Mammary epithelial cell (primary cell): ENCODE measurements at regions of chr17 and their contacts with region 1.

Region 1: GRCh38 chr17:59440784-59441441 is 109.5 kb downstream of the YPEL2 start:
- DNase-seq: peak; percentile 72
- H3K4me3 ChIP-seq: no peak overlapping the region
- H3K27ac ChIP-seq: no peak overlapping the region
- H3K4me1 ChIP-seq: no peaks in the 10 kb centered on the region
- H3K27me3 ChIP-seq: no peaks in the 10 kb centered on the region
- CTCF ChIP-seq: peak; percentile 78 to 82

Region 2: GRCh38 chr17:59220376-59221158 is 220.3 kb before region 1 on chr17 and contains the start of gene GDPD1:
- CTCF ChIA-PET with region 1: no interaction called
- dilution Hi-C with region 1: no loop called
- in situ Hi-C with region 1: no loop called
- intact Hi-C with region 1: loop called (anchors 1 kb)
- DNase-seq: peak; percentile 86
- H3K4me3 ChIP-seq: peak within 1 kb of the TSS; percentile 76 to 90 (median 88)
- H3K27ac ChIP-seq: peak within 1 kb of the TSS; percentile 34
- H3K4me1 ChIP-seq: peaks cover 8% of the 10 kb centered on the region
- H3K27me3 ChIP-seq: no peaks in the 10 kb centered on the region
- CTCF ChIP-seq: peak; percentile 39 to 65
- total RNA-seq, gene GDPD1: 1.9 to 2.8 TPM

Region 3: DNA sequence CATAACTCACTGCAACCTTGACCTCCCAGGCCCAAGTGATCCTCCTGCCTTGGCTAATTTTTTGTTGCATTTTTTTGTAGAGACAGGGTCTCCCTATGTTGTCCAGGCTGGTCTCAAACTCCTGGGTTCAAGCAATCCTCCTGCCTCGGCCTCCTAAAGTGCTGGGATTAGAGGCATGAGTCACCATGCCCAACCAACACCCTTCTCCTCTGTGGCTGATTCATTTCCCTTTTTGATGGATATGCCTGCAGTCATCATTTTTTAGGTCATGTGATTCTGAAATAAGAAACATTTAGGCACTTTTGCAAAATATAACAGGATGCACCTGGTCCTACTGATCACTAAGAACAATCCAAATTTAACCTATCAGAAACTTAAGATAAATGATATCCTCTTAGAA is 153.5 kb before region 1 on chr17:
- CTCF ChIA-PET with region 1: no interaction called
- dilution Hi-C with region 1: no loop called
- in situ Hi-C with region 1: no loop called
- intact Hi-C with region 1: no loop called
- DNase-seq: peak; percentile 51
- H3K4me3 ChIP-seq: no peak overlapping the region
- H3K27ac ChIP-seq: no peak overlapping the region
- H3K4me1 ChIP-seq: no peaks in the 10 kb centered on the region
- H3K27me3 ChIP-seq: no peaks in the 10 kb centered on the region
- CTCF ChIP-seq: no peak